SK-N-SH (cell line): ENCODE measurements at regions of chr2 and their contacts with region 1.

Region 1: DNA sequence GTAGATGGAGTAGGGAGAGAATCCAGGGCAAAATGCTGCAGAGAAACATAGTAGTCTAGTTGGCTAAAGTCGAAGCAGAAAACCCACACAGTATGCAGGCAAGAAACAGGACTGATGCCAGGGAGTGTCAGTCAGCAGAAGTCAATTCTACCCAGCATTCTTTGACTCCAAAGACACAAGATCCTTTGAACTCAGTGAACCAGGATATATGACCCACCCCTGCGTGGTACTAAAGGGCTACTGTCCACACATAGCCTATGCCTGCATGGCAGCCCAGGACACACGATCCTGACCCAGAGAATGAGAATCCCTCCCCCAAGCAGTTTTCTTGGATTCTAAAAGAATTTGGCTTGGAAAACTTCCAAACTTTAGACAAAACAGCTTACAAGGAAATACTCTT is 42.5 kb downstream of the ALK start:
- DNase-seq: no peak
- H3K4me3 ChIP-seq: no peak overlapping the region
- H3K27ac ChIP-seq: no peak overlapping the region; a peak in 1 of 4 replicates
- H3K4me1 ChIP-seq: peaks cover 0 to 36% of the 10 kb centered on the region in 2 experiments; a peak in 2 of 4 replicates
- H3K27me3 ChIP-seq: no peaks in the 10 kb centered on the region
- CTCF ChIP-seq: no peak
- EP300 ChIP-seq: no peak
- RAD21 ChIP-seq: no peak

Region 2: GRCh38 chr2:29855924-29856639 is 22.8 kb before region 1 on chr2:
- CTCF ChIA-PET with region 1: no interaction called
- POLR2A ChIA-PET with region 1: no interaction called
- DNase-seq: no peak
- H3K4me3 ChIP-seq: no peak overlapping the region
- H3K27ac ChIP-seq: no peak overlapping the region
- H3K4me1 ChIP-seq: peaks cover 0 to 15% of the 10 kb centered on the region in 2 experiments; a peak in 1 of 4 replicates
- H3K27me3 ChIP-seq: no peaks in the 10 kb centered on the region
- CTCF ChIP-seq: no peak
- EP300 ChIP-seq: no peak
- RAD21 ChIP-seq: no peak

Region 3: DNA sequence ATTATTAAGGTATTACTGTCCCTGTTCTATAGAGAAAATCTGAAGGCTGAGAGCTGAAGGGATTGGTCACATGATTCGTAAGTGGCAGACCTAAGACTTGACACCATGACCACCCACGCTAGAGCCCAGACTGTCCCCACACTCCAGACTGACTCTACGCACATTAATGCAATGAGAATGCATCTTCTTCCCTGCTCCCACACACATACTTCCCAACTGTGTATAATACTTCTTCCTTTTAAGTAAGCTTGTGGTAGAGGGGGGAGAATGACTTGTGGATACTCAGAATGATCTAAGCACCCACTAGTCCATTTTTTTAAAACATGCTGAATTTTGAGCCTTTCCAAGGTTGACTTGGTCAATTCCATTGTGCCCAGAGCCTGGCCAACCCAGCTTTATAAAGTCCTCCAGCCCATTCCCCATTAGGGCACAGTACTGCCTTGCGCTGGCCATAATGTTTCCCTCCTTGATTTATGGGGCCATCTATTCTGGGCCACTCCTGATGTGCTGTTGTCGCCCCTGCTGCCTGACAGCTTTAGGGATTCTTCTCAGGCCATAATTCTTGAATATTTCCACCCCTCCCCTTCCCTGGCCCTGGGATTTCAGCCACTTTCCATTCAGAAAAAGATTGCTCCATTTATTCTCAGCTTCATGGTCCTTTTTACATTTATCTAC is 13.8 kb after region 1 on chr2:
- CTCF ChIA-PET with region 1: interaction called, 24 read pairs
- POLR2A ChIA-PET with region 1: no interaction called
- DNase-seq: no peak
- H3K4me3 ChIP-seq: no peak overlapping the region
- H3K27ac ChIP-seq: no peak overlapping the region; a peak in 1 of 4 replicates
- H3K4me1 ChIP-seq: peaks cover 0 to 42% of the 10 kb centered on the region in 2 experiments; a peak in 2 of 4 replicates
- H3K27me3 ChIP-seq: no peaks in the 10 kb centered on the region
- CTCF ChIP-seq: no peak
- EP300 ChIP-seq: no peak
- RAD21 ChIP-seq: no peak

Region 4: DNA sequence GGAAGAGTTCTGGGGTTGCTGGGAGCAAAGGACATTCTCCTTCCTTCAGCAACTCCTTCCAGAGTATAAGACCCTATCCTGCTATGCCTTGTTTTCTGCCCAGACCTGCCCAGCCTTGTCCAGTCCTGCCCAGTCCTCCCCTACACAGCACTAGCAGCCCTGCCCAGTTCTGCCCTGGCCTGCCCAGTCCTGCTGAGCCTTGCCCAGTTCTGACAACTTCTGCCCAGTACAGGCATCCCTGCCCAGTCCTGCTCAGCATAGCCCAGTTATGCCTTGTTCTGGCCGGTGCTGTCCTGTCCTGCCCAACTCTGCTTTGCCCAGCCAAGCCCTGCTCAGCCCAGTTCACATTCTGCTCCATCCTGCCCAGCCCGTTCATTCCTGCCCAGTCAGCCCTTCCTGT is 87.4 kb after region 1 on chr2:
- CTCF ChIA-PET with region 1: no interaction called
- POLR2A ChIA-PET with region 1: no interaction called
- DNase-seq: no peak
- H3K4me3 ChIP-seq: no peak overlapping the region
- H3K27ac ChIP-seq: no peak overlapping the region
- H3K4me1 ChIP-seq: no peaks in the 10 kb centered on the region
- H3K27me3 ChIP-seq: no peaks in the 10 kb centered on the region
- CTCF ChIP-seq: no peak
- EP300 ChIP-seq: no peak
- RAD21 ChIP-seq: no peak

Region 5: GRCh38 chr2:30136764-30137444 is 258.0 kb after region 1 on chr2:
- CTCF ChIA-PET with region 1: no interaction called
- POLR2A ChIA-PET with region 1: no interaction called
- DNase-seq: no peak
- H3K4me3 ChIP-seq: no peak overlapping the region
- H3K27ac ChIP-seq: no peak overlapping the region
- H3K4me1 ChIP-seq: no peaks in the 10 kb centered on the region
- H3K27me3 ChIP-seq: no peaks in the 10 kb centered on the region
- CTCF ChIP-seq: no peak
- EP300 ChIP-seq: no peak
- RAD21 ChIP-seq: no peak